ENCODE measurements at regions of chr10 and their contacts with region 1.

Region 1: DNA sequence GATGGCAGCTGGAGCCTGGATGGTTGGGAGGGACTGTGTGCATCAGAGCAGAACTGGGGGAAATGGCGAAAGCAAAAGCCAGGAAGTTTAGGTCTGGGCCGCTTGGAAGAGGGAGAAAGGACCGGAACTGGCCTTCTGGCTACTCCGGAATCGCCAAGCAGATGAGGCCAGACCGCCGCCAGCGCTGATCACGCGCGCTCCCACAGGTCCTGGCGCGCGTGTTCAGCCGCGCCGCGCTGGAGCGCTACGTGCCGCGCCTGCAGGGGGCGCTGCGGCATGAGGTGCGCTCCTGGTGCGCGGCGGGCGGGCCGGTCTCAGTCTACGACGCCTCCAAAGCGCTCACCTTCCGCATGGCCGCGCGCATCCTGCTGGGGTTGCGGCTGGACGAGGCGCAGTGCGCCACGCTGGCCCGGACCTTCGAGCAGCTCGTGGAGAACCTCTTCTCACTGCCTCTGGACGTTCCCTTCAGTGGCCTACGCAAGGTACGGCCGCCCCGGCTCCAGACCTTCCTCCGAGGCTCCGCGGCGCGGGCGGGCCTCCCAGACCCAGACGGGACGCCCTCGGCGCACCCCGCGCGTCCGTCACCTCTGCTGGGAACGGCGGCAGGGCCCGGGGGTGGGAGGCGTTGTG is 2.0 kb downstream of the CYP26C1 start:
- ATAC-seq: peak; percentile 30 to 93 (median 76)
- H3K4me3 ChIP-seq: peak overlapping the region in 3 of 5 donors; percentile 15 to 27 (median 23)
- H3K27ac ChIP-seq: no peak overlapping the region
- H3K4me1 ChIP-seq: no peaks in the 10 kb centered on the region

Region 2: GRCh38 chr10:92231196-92231595 is 831.4 kb before region 1 on chr10:
- in situ Hi-C with region 1: no loop called
- ATAC-seq: no peak
- H3K4me3 ChIP-seq: no peak overlapping the region
- H3K27ac ChIP-seq: no peak overlapping the region
- H3K4me1 ChIP-seq: peaks cover 0 to 7% of the 10 kb centered on the region in 2 donors

Region 3: DNA sequence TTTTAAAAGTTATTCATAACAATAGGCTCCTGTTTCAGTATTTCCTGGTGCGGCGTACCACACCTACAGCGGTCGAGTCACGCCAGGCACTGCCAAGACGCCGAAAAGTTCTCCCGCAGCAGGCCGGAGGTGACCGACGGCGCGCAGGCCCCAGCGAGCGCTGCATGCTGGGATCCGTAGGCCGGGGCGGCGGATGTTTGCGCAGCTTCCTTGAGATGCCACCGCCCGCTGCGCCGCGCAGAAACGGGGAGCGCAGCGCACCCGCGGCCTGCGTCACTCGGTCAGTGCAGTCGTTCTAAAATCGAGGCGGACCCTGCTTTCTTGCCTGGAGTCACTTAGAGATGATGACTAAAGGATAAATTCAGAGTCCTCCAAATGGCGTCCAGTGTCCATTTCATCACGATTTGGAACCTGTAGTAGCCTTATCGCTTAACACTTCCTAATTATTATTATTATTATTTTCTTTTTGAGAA is 471.0 kb before region 1 on chr10:
- in situ Hi-C with region 1: no loop called
- ATAC-seq: peak; percentile 68 to 83 (median 78)
- H3K4me3 ChIP-seq: peak overlapping the region; percentile 15 to 27 (median 17)
- H3K27ac ChIP-seq: peak overlapping the region; percentile 69 to 76
- H3K4me1 ChIP-seq: peaks cover 6 to 14% of the 10 kb centered on the region in 2 donors

Region 4: GRCh38 chr10:92880233-92880861 is 182.3 kb before region 1 on chr10:
- in situ Hi-C with region 1: loop called in 1 of 9 experiments (anchors 25 kb)
- ATAC-seq: peak in 5 of 8 experiments; percentile 45 to 85 (median 78)
- H3K4me3 ChIP-seq: no peak overlapping the region
- H3K27ac ChIP-seq: no peak overlapping the region
- H3K4me1 ChIP-seq: peaks cover 0 to 4% of the 10 kb centered on the region in 2 donors

Region 5: GRCh38 chr10:93211991-93212390 is 149.4 kb after region 1 on chr10:
- in situ Hi-C with region 1: no loop called
- ATAC-seq: no peak
- H3K4me3 ChIP-seq: no peak overlapping the region
- H3K27ac ChIP-seq: no peak overlapping the region
- H3K4me1 ChIP-seq: peaks cover 0 to 2% of the 10 kb centered on the region in 2 donors